Colonic mucosa (tissue), 4 donors: ENCODE measurements at regions of chr20 and their contacts with region 1.

Region 1: DNA sequence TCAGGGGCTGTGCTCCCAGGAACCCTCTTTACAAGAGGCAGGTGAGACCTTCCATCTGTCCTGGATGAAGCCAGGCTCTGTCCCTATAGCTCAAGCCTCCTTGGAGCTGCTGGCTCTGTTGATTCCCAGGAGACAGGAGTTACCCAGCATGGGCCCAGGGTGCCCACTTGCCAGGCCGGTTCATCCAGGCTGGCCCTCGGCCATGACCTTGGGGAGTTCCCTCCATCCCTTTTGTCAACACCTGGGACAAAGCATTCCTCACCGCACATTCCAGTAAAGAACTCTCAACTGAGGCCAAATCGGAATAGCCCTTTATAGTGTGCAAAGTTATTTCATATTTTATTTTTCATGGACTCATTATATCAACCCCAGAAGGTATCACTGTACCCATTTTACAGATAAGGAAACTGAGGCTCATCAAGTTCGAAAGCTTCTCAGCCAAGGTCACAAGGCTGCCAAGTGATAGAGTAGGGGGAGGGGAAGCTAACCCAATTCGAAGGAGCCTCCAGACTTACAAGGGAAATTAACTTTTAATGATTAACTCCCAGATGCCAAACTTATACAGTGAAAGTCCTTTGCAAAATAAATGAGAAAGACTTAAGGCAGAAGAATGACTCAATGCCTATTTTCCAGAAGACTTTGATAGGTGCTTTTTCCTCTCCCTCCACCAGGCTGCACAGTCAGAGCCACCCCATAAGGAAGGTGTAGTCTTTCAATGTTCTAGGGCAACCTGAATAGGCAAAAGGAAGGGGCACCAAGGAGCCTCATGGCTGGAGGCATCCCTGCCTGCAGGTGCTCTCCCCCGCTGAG is 18.5 kb downstream of the SDC4 start:
- DNase-seq: no peak
- H3K4me3 ChIP-seq: no peak overlapping the region
- H3K27ac ChIP-seq: no peak overlapping the region
- H3K4me1 ChIP-seq: no peaks in the 10 kb centered on the region
- H3K27me3 ChIP-seq: no peaks in the 10 kb centered on the region
- CTCF ChIP-seq: no peak

Region 2: DNA sequence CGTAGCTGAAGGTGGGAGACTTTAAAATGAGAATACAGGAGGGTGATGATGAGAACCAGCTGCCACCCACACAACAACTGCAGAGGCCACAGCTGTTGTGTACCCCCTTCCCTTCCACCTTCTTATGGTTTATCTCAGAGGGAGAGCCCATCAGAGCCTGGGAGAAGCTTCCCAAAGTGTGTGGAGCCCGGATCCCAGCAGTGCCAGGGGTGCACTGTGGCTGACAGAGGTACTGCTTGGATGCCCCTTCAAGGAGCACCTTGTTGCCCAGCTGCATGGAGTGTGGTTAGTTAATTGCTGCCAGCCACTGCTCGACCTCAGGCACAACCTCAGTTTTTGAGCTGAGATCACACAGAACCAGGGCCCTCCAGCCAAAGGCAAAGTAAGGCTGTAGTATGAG is 142.1 kb before region 1 on chr20:
- intact Hi-C with region 1: no loop called
- DNase-seq: no peak
- H3K4me3 ChIP-seq: no peak overlapping the region
- H3K27ac ChIP-seq: no peak overlapping the region
- H3K4me1 ChIP-seq: no peaks in the 10 kb centered on the region
- H3K27me3 ChIP-seq: no peaks in the 10 kb centered on the region
- CTCF ChIP-seq: no peak

Region 3: GRCh38 chr20:45206746-45207145 is 123.0 kb before region 1 on chr20 and contains the start of gene SEMG1:
- intact Hi-C with region 1: no loop called
- DNase-seq: peak; percentile 21
- H3K4me3 ChIP-seq: no peak within 1 kb of the TSS
- H3K27ac ChIP-seq: no peak within 1 kb of the TSS
- H3K4me1 ChIP-seq: no peaks in the 10 kb centered on the region
- H3K27me3 ChIP-seq: no peaks in the 10 kb centered on the region
- CTCF ChIP-seq: no peak
- total RNA-seq, gene SEMG1: 0.42 to 1.0 TPM

Region 4: GRCh38 chr20:45283548-45284057 is 46.1 kb before region 1 on chr20:
- intact Hi-C with region 1: no loop called
- DNase-seq: no peak
- H3K4me3 ChIP-seq: no peak overlapping the region
- H3K27ac ChIP-seq: no peak overlapping the region
- H3K4me1 ChIP-seq: no peaks in the 10 kb centered on the region
- H3K27me3 ChIP-seq: no peaks in the 10 kb centered on the region
- CTCF ChIP-seq: no peak

Region 5: GRCh38 chr20:45368221-45368980 is 38.7 kb after region 1 on chr20:
- intact Hi-C with region 1: loop called (anchors 5 kb)
- DNase-seq: no peak
- H3K4me3 ChIP-seq: no peak overlapping the region
- H3K27ac ChIP-seq: no peak overlapping the region
- H3K4me1 ChIP-seq: peaks cover 3% of the 10 kb centered on the region
- H3K27me3 ChIP-seq: no peaks in the 10 kb centered on the region
- CTCF ChIP-seq: no peak

Region 6: GRCh38 chr20:45538209-45538799 is 208.6 kb after region 1 on chr20:
- intact Hi-C with region 1: no loop called
- DNase-seq: no peak
- H3K4me3 ChIP-seq: no peak overlapping the region
- H3K27ac ChIP-seq: no peak overlapping the region
- H3K4me1 ChIP-seq: no peaks in the 10 kb centered on the region
- H3K27me3 ChIP-seq: no peaks in the 10 kb centered on the region
- CTCF ChIP-seq: no peak